HCT116 (cell line): ENCODE measurements at regions of chr18 and their contacts with region 1.

Region 1: GRCh38 chr18:111292-112014 is 46.9 kb upstream of the USP14 start:
- DNase-seq: no peak
- ATAC-seq: peak; percentile 58
- H3K4me3 ChIP-seq: no peak overlapping the region
- H3K27ac ChIP-seq: no peak overlapping the region
- H3K4me1 ChIP-seq: peaks cover 3 to 5% of the 10 kb centered on the region in 2 experiments; a peak in 2 of 4 replicates
- H3K27me3 ChIP-seq: no peaks in the 10 kb centered on the region
- CTCF ChIP-seq: no peak
- POLR2A ChIP-seq: no peak
- RAD21 ChIP-seq: no peak

Region 2: GRCh38 chr18:158128-159036 is 46.9 kb after region 1 on chr18 and contains the start of gene USP14:
- CTCF ChIA-PET with region 1: interaction called, 5 read pairs
- POLR2A ChIA-PET with region 1: no interaction called
- RAD21 ChIA-PET with region 1: no interaction called
- intact Hi-C with region 1: loop called (anchors 5 kb)
- DNase-seq: peak; percentile 78
- ATAC-seq: peak; percentile 95
- H3K4me3 ChIP-seq: peak within 1 kb of the TSS; percentile 75 to 78
- H3K27ac ChIP-seq: peak within 1 kb of the TSS; percentile 51
- H3K4me1 ChIP-seq: no peaks in the 10 kb centered on the region
- H3K27me3 ChIP-seq: no peaks in the 10 kb centered on the region
- CTCF ChIP-seq: no peak
- POLR2A ChIP-seq: no peak
- RAD21 ChIP-seq: no peak
- total RNA-seq, gene USP14: 56.1 TPM

Region 3: DNA sequence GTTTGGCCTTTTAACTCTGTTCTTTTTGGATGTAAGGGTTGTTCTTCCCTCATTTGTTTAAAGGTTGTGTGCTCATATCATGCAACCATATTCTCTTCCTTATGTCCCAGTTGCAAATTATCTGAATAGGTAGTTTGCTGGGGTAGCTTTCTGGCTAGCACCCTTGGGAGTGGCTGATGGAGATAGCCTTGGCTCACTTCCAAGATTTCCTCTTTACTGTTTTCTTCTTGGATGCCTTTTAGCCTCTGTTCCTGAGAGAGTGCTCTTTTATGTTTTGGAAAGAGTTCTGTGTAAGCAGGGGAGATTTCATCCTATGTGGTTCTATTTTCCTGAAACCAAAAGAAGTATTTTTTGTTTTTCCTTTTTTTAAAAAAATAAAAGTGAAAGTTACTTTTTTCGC is 72.3 kb after region 1 on chr18:
- CTCF ChIA-PET with region 1: no interaction called
- POLR2A ChIA-PET with region 1: no interaction called
- RAD21 ChIA-PET with region 1: no interaction called
- intact Hi-C with region 1: no loop called
- DNase-seq: no peak
- ATAC-seq: no peak
- H3K4me3 ChIP-seq: no peak overlapping the region
- H3K27ac ChIP-seq: no peak overlapping the region
- H3K4me1 ChIP-seq: no peaks in the 10 kb centered on the region
- H3K27me3 ChIP-seq: no peaks in the 10 kb centered on the region
- CTCF ChIP-seq: no peak
- POLR2A ChIP-seq: no peak
- RAD21 ChIP-seq: no peak

Region 4: GRCh38 chr18:267688-268552 is 156.5 kb after region 1 on chr18 and contains the start of gene THOC1:
- CTCF ChIA-PET with region 1: no interaction called
- POLR2A ChIA-PET with region 1: no interaction called
- RAD21 ChIA-PET with region 1: no interaction called
- intact Hi-C with region 1: loop called (anchors 5 kb)
- DNase-seq: peak; percentile 60
- ATAC-seq: peak; percentile 88
- H3K4me3 ChIP-seq: peak within 1 kb of the TSS; percentile 75 to 78
- H3K27ac ChIP-seq: peak within 1 kb of the TSS; percentile 71
- H3K4me1 ChIP-seq: peaks cover 0 to 3% of the 10 kb centered on the region in 2 experiments; a peak in 1 of 4 replicates
- H3K27me3 ChIP-seq: no peaks in the 10 kb centered on the region
- CTCF ChIP-seq: no peak
- POLR2A ChIP-seq: peak; percentile 25
- RAD21 ChIP-seq: no peak
- total RNA-seq, gene THOC1: 26.0 TPM